Naive thymus-derived CD4-positive, alpha-beta T cell (primary cell): ENCODE measurements at regions of chr17 and their contacts with region 1.

Region 1: GRCh38 chr17:75261336-75262111 is at the starts of genes GGA3 and MRPS7:
- DNase-seq: peak; percentile 94 to 98 (median 96)
- ATAC-seq: peak; percentile 97
- H3K4me3 ChIP-seq: peak within 1 kb of the TSS; percentile 98
- H3K4me3 Mint-ChIP-seq: peak within 1 kb of the TSS; percentile 94 to 100 (median 97)
- H3K27ac ChIP-seq: peak within 1 kb of the TSS; percentile 99
- H3K27ac Mint-ChIP-seq: peak within 1 kb of the TSS; percentile 100
- H3K4me1 ChIP-seq: peaks cover 23% of the 10 kb centered on the region in 2 donors
- H3K4me1 Mint-ChIP-seq: peaks cover 40 to 65% (median 62%) of the 10 kb centered on the region in 7 donors
- H3K27me3 ChIP-seq: no peaks in the 10 kb centered on the region
- H3K27me3 Mint-ChIP-seq: no peaks in the 10 kb centered on the region
- total RNA-seq, gene GGA3: 79.6 to 128 (median 87.4) TPM
- total RNA-seq, gene MRPS7: 29.2 to 70.1 (median 34.4) TPM

Region 2: GRCh38 chr17:75012346-75013091 is 249.0 kb before region 1 on chr17 and contains the start of gene MRPL58:
- CTCF ChIA-PET with region 1: no interaction called
- POLR2A ChIA-PET with region 1: interaction called, 10 read pairs
- intact Hi-C with region 1: no loop called
- DNase-seq: peak; percentile 66 to 81 (median 75)
- ATAC-seq: peak; percentile 97
- H3K4me3 ChIP-seq: peak within 1 kb of the TSS; percentile 69
- H3K4me3 Mint-ChIP-seq: peak within 1 kb of the TSS; percentile 76 to 98 (median 94)
- H3K27ac ChIP-seq: peak within 1 kb of the TSS; percentile 83
- H3K27ac Mint-ChIP-seq: peak within 1 kb of the TSS; percentile 5 to 97 (median 92)
- H3K4me1 ChIP-seq: peaks cover 9 to 14% of the 10 kb centered on the region in 2 donors
- H3K4me1 Mint-ChIP-seq: peaks cover 25 to 38% (median 35%) of the 10 kb centered on the region in 7 donors
- H3K27me3 ChIP-seq: no peaks in the 10 kb centered on the region
- H3K27me3 Mint-ChIP-seq: peaks cover 0 to 4% (median 0%) of the 10 kb centered on the region in 5 donors
- total RNA-seq, gene MRPL58: 11.7 to 46.1 (median 23.0) TPM

Region 3: GRCh38 chr17:75182569-75183450 is 78.7 kb before region 1 on chr17 and contains the start of gene SUMO2:
- CTCF ChIA-PET with region 1: interaction called, 3 read pairs
- POLR2A ChIA-PET with region 1: interaction called, 10 read pairs
- intact Hi-C with region 1: loop called (anchors 1 to 2 kb)
- DNase-seq: peak; percentile 90 to 97 (median 94)
- ATAC-seq: peak; percentile 92
- H3K4me3 ChIP-seq: peak within 1 kb of the TSS; percentile 56
- H3K4me3 Mint-ChIP-seq: peak within 1 kb of the TSS; percentile 87 to 100 (median 92)
- H3K27ac ChIP-seq: peak within 1 kb of the TSS; percentile 94
- H3K27ac Mint-ChIP-seq: peak within 1 kb of the TSS; percentile 92 to 99 (median 97)
- H3K4me1 ChIP-seq: peaks cover 22 to 26% of the 10 kb centered on the region in 2 donors
- H3K4me1 Mint-ChIP-seq: peaks cover 20 to 55% (median 38%) of the 10 kb centered on the region in 7 donors
- H3K27me3 ChIP-seq: no peaks in the 10 kb centered on the region
- H3K27me3 Mint-ChIP-seq: no peaks in the 10 kb centered on the region
- total RNA-seq, gene SUMO2: 201 to 494 (median 247) TPM

Region 4: DNA sequence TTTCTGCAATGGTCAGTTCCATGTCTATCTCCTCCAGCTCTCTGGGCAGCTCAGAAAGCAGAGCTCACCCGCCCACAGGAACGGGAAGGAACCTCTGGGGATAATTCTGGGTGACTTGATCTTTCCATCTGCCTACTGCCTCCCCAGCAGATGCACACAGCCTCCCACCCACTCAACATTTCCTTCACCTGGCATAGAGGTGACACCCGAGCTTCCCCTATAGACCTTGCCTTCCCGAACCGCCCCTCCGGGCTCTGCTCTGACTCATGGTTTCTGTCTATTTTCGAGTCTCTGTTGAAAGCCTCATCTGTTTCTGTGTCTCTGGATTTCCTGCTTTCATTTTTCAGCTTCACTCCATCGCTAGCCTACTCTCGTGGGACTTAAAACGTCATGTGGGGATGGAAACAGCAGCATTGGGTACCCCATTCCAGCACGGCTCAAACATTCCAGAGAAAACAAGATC is 11.5 kb before region 1 on chr17:
- CTCF ChIA-PET with region 1: interaction called, 3 read pairs
- POLR2A ChIA-PET with region 1: interaction called, 25 read pairs
- intact Hi-C with region 1: loop called (anchors 1 kb)
- DNase-seq: peak in 6 of 9 donors; percentile 30 to 80 (median 36)
- ATAC-seq: peak; percentile 85
- H3K4me3 ChIP-seq: peak overlapping the region; percentile 40
- H3K4me3 Mint-ChIP-seq: peak overlapping the region; percentile 57 to 89 (median 72)
- H3K27ac ChIP-seq: peak overlapping the region; percentile 64
- H3K27ac Mint-ChIP-seq: peak overlapping the region; percentile 81 to 99 (median 90)
- H3K4me1 ChIP-seq: peaks cover 9 to 15% of the 10 kb centered on the region in 2 donors
- H3K4me1 Mint-ChIP-seq: peaks cover 35 to 57% (median 52%) of the 10 kb centered on the region in 7 donors
- H3K27me3 ChIP-seq: no peaks in the 10 kb centered on the region
- H3K27me3 Mint-ChIP-seq: no peaks in the 10 kb centered on the region

Region 5: GRCh38 chr17:75524953-75525719 is 263.6 kb after region 1 on chr17 and contains the start of gene LLGL2:
- CTCF ChIA-PET with region 1: no interaction called
- POLR2A ChIA-PET with region 1: no interaction called
- intact Hi-C with region 1: loop called in 1 of 2 experiments (anchors 1 kb)
- DNase-seq: peak; percentile 82 to 91 (median 89)
- ATAC-seq: peak; percentile 98
- H3K4me3 ChIP-seq: peak within 1 kb of the TSS; percentile 75
- H3K4me3 Mint-ChIP-seq: peak within 1 kb of the TSS; percentile 76 to 86 (median 82)
- H3K27ac ChIP-seq: peak within 1 kb of the TSS; percentile 67
- H3K27ac Mint-ChIP-seq: peak within 1 kb of the TSS in 7 of 9 donors; percentile 45 to 74 (median 59)
- H3K4me1 ChIP-seq: peaks cover 6 to 7% of the 10 kb centered on the region in 2 donors
- H3K4me1 Mint-ChIP-seq: peaks cover 0 to 20% (median 16%) of the 10 kb centered on the region in 7 donors
- H3K27me3 ChIP-seq: no peaks in the 10 kb centered on the region
- H3K27me3 Mint-ChIP-seq: peaks cover 0 to 11% (median 0%) of the 10 kb centered on the region in 5 donors
- total RNA-seq, gene LLGL2: 22.4 to 55.7 (median 33.7) TPM